ENCODE measurements at regions of chr7 and their contacts with region 1.

Region 1: DNA sequence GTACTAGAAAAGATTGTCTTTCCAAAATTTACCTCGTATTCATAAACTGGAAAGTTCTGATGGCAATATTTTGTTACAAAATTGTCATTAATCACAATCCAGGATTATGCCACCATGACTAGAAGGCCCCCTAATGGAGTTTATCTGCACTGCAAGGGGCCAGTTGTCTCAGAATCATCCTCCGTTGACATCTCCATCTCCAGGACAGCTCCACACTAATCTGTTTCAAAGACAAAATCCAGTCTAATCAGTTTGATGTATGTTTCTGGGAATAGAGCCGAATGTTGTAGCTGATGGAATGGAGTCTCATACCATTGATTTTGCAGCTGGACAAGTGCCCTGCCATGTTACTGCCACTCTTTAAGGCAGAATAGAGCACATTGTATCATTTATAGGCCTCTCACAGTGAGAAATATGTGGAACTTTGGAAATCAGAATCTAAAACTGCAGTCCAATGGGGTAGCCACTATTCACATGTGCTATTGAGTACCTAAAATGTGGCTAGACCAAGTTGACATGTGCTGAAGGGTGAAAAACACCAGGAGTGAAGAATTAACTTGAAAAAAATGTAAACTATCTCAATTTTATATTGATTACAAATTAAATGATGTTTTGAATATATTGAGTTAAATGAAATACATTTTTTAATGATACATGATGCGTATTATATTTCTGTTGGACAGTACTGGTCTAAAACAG is 38.3 kb upstream of the TOMM7 start:
- DNase-seq: peak; percentile 21
- H3K4me3 ChIP-seq: no peak overlapping the region
- H3K27ac ChIP-seq: no peak overlapping the region
- H3K4me1 ChIP-seq: peaks cover 27% of the 10 kb centered on the region
- H3K27me3 ChIP-seq: no peaks in the 10 kb centered on the region
- CTCF ChIP-seq: peak; percentile 46 to 65
- POLR2A ChIP-seq: no peak

Region 2: DNA sequence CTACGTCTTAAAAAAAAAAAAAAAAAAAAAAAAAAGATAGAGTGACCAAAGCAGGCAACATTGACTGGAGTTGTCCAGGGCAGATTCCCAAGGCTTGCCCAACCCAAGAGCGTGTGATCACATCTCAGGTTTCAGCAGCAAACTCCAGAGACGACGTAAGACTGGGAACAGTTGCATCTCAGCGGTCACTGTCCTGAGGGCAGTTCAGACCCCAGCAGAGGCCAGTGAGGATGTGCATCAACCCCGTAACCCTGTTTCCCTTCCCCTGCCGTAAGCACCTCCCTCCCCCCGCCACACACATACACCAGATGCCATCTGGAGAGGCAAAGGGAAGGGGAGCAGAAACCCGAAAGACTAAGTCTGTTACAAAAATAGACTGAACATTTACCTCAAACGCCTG is 19.0 kb before region 1 on chr7:
- CTCF ChIA-PET with region 1: no interaction called
- POLR2A ChIA-PET with region 1: no interaction called
- dilution Hi-C with region 1: no loop called
- intact Hi-C with region 1: no loop called
- DNase-seq: no peak
- H3K4me3 ChIP-seq: no peak overlapping the region
- H3K27ac ChIP-seq: no peak overlapping the region
- H3K4me1 ChIP-seq: no peaks in the 10 kb centered on the region
- H3K27me3 ChIP-seq: peaks cover 3 to 4% of the 10 kb centered on the region in 2 experiments
- CTCF ChIP-seq: no peak
- POLR2A ChIP-seq: no peak

Region 3: DNA sequence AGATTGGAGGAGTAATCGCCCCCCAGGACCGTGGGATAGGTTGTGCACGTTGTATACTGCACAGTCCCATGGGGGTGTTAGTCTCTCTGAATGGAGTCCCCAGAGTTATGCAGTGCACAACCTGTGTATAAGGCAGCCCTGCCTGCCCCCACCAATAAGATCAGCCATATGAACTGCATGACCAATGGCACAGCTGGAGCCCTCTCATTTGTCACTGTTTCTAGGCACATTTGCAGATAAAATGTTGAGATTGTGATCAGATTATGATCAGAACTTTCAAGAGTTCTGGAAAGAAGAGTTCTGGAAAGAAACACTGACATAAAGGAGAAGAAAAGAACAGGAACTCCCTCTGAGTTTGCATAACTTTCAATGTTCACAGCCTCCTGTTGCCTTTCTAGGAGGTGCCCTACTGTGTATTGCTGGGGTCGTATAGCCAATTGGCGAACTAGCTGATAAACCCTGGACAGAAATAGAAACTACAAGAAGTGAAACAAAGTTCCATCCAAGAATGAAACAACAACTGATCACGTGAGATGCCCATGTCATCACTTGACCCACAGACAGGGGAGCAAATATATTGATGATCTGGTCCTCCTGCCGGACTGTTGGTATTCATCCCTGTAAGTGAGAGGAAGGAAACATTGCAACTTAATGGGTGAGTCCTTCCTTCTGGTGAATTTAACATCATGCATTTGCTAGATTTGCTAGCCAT is 11.3 kb after region 1 on chr7:
- CTCF ChIA-PET with region 1: interaction called, 12 read pairs
- POLR2A ChIA-PET with region 1: no interaction called
- dilution Hi-C with region 1: no loop called
- intact Hi-C with region 1: no loop called
- DNase-seq: no peak
- H3K4me3 ChIP-seq: no peak overlapping the region
- H3K27ac ChIP-seq: no peak overlapping the region
- H3K4me1 ChIP-seq: no peaks in the 10 kb centered on the region
- H3K27me3 ChIP-seq: no peaks in the 10 kb centered on the region
- CTCF ChIP-seq: no peak
- POLR2A ChIP-seq: no peak